H1 (cell line): ENCODE measurements at regions of chr18 and their contacts with region 1.

Region 1: DNA sequence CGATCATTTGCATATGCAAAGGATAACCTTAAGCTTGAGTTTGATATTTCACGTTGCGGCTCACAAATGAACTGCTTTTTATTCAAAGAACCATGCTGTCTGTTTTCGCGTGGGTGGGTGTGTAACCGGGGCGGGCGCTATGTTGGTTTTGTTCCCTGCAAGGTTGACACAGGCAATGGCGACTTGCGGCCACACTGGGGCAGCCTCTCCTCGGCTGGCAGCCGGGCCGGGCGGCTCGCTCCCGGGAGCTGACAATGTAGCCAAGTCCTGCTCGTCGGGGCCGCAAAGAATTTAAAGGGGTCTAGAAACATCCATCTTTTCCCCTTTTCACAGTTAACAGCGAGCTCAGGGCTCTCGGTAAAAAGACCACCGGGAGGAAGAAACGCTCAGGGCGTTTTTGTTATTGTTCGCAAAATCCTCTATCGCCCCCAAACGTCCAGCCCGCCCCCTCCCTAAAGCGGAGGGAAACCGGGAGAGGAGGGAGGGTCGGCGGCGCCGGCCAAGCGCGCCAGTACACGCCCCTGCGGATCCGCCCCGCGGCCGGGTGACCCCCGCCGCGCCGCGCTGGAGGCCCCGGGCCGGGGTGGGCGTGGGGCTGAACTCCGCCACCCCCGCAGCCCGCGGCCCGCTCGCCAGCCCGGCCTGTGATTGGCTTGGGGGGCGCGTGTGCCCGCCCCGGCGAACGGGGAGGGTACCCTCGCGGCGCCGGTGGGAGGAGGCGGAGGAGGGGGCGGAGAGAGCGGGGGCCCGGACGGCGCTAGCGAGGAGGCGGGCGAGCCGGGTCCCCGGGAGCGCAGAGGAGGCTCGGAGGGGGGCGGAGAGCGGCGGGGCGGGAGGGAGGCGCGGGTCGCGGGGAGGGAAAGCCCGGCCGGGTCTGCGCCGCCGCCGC is at the start of gene NEDD4L:
- DNase-seq: peak in 1 of 2 experiments; percentile 87
- H3K4me3 ChIP-seq: peak within 1 kb of the TSS; percentile 73 to 99 (median 84)
- H3K27ac ChIP-seq: peak within 1 kb of the TSS; percentile 53; the same call in 1 of the 2 replicates
- H3K4me1 ChIP-seq: peaks cover 3 to 7% (median 5%) of the 10 kb centered on the region in 4 experiments; a peak in 5 of 7 replicates
- H3K27me3 ChIP-seq: no peaks in the 10 kb centered on the region; a peak in 1 of 7 replicates
- CTCF ChIP-seq: peak; percentile 74 to 90 (median 90)
- EP300 ChIP-seq: no peak
- POLR2A ChIP-seq: no peak
- RAD21 ChIP-seq: peak; percentile 91 to 93
- total RNA-seq, gene NEDD4L: 63.4 and 69.8 TPM in 2 replicates

Region 2: GRCh38 chr18:58067601-58068000 is 23.9 kb after region 1 on chr18:
- CTCF ChIA-PET with region 1: interaction called, 14 read pairs
- POLR2A ChIA-PET with region 1: interaction called, 4 read pairs
- DNase-seq: no peak
- H3K4me3 ChIP-seq: no peak overlapping the region
- H3K27ac ChIP-seq: no peak overlapping the region
- H3K4me1 ChIP-seq: peaks cover 4 to 8% (median 6%) of the 10 kb centered on the region in 4 experiments; a peak in 4 of 7 replicates
- H3K27me3 ChIP-seq: no peaks in the 10 kb centered on the region
- CTCF ChIP-seq: peak in 1 of 3 experiments; percentile 13; a peak in 1 of 4 replicates
- EP300 ChIP-seq: no peak
- POLR2A ChIP-seq: no peak
- RAD21 ChIP-seq: peak in 1 of 2 experiments; percentile 25; a peak in 1 of 4 replicates

Region 3: GRCh38 chr18:58117786-58118403 is 74.2 kb after region 1 on chr18:
- CTCF ChIA-PET with region 1: interaction called, 63 read pairs
- POLR2A ChIA-PET with region 1: interaction called, 5 read pairs
- DNase-seq: no peak
- H3K4me3 ChIP-seq: no peak overlapping the region
- H3K27ac ChIP-seq: no peak overlapping the region
- H3K4me1 ChIP-seq: peaks cover 0 to 16% (median 5%) of the 10 kb centered on the region in 4 experiments; a peak in 6 of 7 replicates
- H3K27me3 ChIP-seq: no peaks in the 10 kb centered on the region
- CTCF ChIP-seq: no peak
- EP300 ChIP-seq: no peak
- POLR2A ChIP-seq: no peak
- RAD21 ChIP-seq: no peak

Region 4: DNA sequence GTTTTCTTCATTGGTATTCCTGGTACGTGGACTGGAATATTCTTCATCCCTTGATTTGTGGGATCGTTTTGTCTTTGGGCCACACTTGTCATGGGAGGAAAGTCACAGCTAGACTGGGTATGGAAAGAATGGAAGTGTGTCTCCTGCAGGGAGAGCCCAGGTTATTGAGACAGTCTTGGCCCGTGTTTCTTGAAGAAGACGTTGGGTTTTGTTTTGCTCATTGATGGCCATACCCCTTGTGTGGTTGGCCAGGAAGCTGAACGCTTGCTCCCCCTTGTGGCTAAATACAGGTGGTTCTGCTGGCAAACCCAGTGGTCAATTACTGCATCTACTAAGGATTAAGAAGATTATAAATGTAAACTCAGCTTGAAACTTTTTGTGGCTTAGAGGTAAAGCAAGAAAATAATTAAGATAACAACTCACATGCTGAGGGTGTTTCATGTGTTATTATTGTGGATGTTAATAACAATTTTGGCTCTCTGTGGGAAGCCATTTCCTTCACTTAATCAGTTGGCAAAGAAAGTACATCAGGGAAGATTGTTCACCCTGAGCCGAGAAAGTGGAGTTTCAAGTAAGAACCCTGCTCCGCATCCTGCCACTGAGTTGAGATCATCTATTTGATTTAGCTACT is 92.1 kb after region 1 on chr18:
- CTCF ChIA-PET with region 1: interaction called, 14 read pairs
- POLR2A ChIA-PET with region 1: interaction called, 9 read pairs
- DNase-seq: peak; percentile 43 to 70
- H3K4me3 ChIP-seq: no peak overlapping the region
- H3K27ac ChIP-seq: no peak overlapping the region
- H3K4me1 ChIP-seq: peaks cover 2 to 17% (median 9%) of the 10 kb centered on the region in 4 experiments; a peak in 5 of 7 replicates
- H3K27me3 ChIP-seq: no peaks in the 10 kb centered on the region
- CTCF ChIP-seq: peak; percentile 76 to 96 (median 94)
- EP300 ChIP-seq: no peak
- POLR2A ChIP-seq: no peak
- RAD21 ChIP-seq: peak; percentile 71 to 81